Activated T-helper 1 cell treated with anti-CD3 and anti-CD28 coated beads, Interleukin-12 subunit alpha, Interleukin-12 subunit beta, Interleukin-2, Interleukin-4 antibody, amounts not matched to agents 30 ng/mL and 10 ng/mL and 1 ng/mL, durations not matched to agents 14 hours and 24 hours and 36 hours (primary cell): ENCODE measurements at regions of chr22 and their contacts with region 1.

Region 1: GRCh38 chr22:41403532-41404318 is 22.0 kb downstream of the TEF start:
- DNase-seq: peak; percentile 79
- H3K4me3 Mint-ChIP-seq: no peak overlapping the region
- H3K27ac Mint-ChIP-seq: peak overlapping the region; percentile 32
- H3K4me1 Mint-ChIP-seq: peaks cover 11% of the 10 kb centered on the region
- H3K27me3 Mint-ChIP-seq: peaks cover 2% of the 10 kb centered on the region

Region 2: GRCh38 chr22:41468381-41469217 is 64.9 kb after region 1 on chr22 and contains the starts of genes ACO2 and PHF5A:
- intact Hi-C with region 1: loop called (anchors 1 kb)
- DNase-seq: peak; percentile 98
- H3K4me3 Mint-ChIP-seq: peak within 1 kb of the TSS; percentile 87
- H3K27ac Mint-ChIP-seq: peak within 1 kb of the TSS; percentile 99
- H3K4me1 Mint-ChIP-seq: peaks cover 22% of the 10 kb centered on the region
- H3K27me3 Mint-ChIP-seq: no peaks in the 10 kb centered on the region
- total RNA-seq, gene ACO2: 99.1 and 101 TPM in 2 replicates
- total RNA-seq, gene PHF5A: 83.7 and 96.8 TPM in 2 replicates

Region 3: DNA sequence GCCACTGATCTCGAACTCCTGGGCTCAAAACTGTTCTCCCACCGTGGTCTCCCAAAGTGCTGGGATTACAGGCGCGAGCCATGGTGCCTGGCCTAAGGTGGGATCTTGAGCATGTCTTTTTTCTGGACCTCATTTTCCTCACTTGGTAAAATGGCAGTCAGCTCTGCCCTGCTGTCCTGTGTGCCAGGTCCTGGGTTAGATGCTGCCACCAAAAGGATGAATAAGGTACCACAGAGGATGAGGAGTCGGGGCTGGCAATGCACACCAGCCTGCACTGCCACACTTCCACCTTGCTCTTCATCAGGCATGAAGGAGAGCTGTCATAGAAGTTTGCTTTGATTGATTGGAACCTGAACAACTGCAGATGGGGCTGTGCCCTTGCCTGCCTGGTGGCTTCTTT is 97.5 kb after region 1 on chr22:
- intact Hi-C with region 1: loop called (anchors 1 kb)
- DNase-seq: no peak
- H3K4me3 Mint-ChIP-seq: no peak overlapping the region
- H3K27ac Mint-ChIP-seq: no peak overlapping the region
- H3K4me1 Mint-ChIP-seq: no peaks in the 10 kb centered on the region
- H3K27me3 Mint-ChIP-seq: no peaks in the 10 kb centered on the region

Region 4: DNA sequence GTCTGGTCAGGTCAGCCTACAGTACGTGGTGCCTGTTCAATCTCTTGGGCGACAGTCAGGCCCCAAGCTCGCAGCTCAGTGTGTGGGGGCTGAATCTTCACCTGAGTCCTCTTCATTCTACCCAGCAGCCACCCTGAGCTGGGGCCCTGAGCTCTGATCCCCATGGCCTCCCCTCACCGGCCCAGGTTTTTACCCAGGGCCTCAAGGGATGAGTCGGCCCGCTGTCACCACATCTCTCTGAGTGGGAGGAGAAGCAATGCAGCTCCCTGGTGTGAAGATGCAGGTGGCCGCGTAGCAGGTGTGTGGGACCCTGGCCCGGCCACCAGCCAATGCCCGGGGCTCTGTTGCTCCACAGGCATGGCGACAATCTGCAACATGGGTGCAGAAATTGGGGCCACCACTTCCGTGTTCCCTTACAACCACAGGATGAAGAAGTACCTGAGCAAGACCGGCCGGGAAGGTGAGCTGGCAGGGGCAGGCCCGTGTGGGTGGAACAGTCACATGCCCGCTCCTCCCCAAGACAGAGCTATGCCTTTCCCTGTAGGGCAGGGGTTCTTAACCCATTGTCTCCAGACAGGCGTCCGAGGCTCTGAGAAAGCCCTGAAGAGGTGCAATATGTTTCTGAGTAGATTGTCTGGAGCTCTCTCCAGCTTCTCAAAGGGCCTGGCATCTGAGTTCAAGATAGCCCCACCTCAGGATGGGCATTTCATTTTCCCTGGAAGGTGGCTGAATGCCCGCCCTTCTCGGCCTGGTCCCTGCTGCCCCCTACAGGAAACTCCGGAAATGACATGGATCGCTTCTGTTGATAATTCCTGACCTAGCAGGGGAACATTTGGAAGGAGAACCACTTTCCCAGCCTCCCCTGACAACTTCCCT is 113.7 kb after region 1 on chr22:
- intact Hi-C with region 1: loop called (anchors 1 kb)
- DNase-seq: no peak
- H3K4me3 Mint-ChIP-seq: no peak overlapping the region
- H3K27ac Mint-ChIP-seq: no peak overlapping the region
- H3K4me1 Mint-ChIP-seq: no peaks in the 10 kb centered on the region
- H3K27me3 Mint-ChIP-seq: no peaks in the 10 kb centered on the region

Region 5: DNA sequence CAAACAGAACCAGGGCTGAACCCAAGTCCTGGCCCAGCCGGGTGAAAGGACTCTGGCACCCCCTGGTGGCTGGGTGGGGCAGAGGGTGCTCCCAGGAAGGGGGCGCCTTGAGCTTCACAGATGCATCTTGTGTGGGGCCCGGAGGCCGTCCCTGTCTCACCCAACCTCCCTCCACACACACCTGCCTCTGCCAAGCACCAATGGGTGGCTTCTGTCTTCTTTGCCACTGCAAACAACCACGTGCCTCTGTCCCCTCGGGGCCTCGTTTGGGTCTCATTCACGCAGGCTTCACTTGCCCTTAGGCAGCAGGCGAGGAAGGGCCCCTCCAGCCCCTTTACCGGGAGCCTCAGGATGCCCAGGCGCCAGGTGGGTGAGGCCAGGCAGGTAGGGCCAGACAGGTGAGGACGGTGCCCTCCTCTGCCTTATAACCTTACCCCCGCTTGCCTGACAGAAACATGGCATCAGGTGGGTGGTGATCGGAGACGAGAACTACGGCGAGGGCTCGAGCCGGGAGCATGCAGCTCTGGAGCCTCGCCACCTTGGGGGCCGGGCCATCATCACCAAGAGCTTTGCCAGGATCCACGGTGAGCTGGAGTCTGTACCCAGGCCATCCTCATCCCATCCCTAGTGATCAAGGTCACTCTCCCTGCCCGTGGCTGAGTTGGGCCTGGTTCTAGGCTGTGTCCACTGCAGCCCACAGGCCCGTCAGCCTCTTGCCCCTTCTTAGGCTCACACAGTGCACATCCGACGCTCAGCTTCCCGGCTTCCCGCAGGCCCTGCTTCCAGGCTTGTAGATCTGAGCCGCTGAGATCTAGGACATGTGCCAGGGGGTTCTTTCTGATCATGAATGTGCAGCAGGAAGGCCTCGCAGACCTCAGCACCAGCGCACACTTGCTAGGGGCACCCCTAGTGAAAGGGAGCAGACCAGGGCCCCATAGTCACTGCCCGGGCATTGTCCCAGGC is 123.4 kb after region 1 on chr22:
- intact Hi-C with region 1: loop called (anchors 1 kb)
- DNase-seq: peak; percentile 50
- H3K4me3 Mint-ChIP-seq: no peak overlapping the region
- H3K27ac Mint-ChIP-seq: no peak overlapping the region
- H3K4me1 Mint-ChIP-seq: peaks cover 11% of the 10 kb centered on the region
- H3K27me3 Mint-ChIP-seq: no peaks in the 10 kb centered on the region

Region 6: GRCh38 chr22:41589391-41590241 is 185.9 kb after region 1 on chr22 and contains the start of gene PMM1:
- intact Hi-C with region 1: loop called (anchors 5 kb)
- DNase-seq: peak; percentile 100
- H3K4me3 Mint-ChIP-seq: peak within 1 kb of the TSS; percentile 92
- H3K27ac Mint-ChIP-seq: peak within 1 kb of the TSS; percentile 82
- H3K4me1 Mint-ChIP-seq: peaks cover 17% of the 10 kb centered on the region
- H3K27me3 Mint-ChIP-seq: no peaks in the 10 kb centered on the region
- total RNA-seq, gene PMM1: 21.4 and 22.6 TPM in 2 replicates